ENCODE measurements at regions of chrX and their contacts with region 1.

Region 1: DNA sequence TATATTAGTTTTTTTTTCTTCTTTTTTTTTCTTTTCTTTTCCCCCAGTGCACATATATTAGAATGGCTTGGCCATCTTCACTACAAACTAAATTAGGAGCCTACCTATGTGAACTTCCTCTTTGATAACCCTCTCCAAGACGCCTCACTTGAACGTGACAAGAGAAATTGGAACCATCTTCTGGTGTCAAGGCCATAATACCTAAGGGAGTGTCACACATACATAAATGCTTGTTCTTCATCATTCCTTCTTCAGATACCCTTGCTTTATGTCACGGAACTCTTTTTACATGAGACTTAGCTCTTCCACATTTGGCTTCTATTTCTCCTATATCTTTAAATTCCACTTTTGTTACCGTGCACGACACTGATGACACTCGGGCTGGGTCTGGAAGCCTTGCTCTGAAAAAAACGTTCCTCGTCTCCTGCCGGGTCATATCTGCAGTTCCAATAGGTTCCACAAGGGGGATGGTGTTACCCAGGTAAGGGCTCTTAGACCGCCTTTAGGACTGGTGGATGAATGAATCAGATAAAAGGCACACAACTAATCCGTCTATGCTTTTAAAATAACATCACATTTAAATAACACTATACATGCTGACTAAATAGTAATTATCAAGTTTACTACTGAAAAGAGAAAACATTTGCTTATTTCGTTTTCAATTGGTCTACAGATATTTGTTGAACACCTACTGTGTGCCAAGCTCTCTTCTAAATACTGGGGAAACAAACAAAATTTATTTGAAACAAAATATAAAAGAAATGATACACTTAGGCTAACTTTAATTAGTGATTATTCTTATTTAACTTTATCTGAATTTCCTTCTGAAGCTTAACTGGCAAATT is 19.9 kb downstream of the DGAT2L6 start:
- DNase-seq: peak; percentile 67
- H3K4me3 ChIP-seq: no peak overlapping the region
- H3K27ac ChIP-seq: no peak overlapping the region
- H3K4me1 ChIP-seq: no peaks in the 10 kb centered on the region
- H3K27me3 ChIP-seq: no peaks in the 10 kb centered on the region
- CTCF ChIP-seq: peak; percentile 74

Region 2: GRCh38 chrX:69961365-69962072 is 235.7 kb before region 1 on chrX:
- intact Hi-C with region 1: no loop called
- DNase-seq: no peak
- H3K4me3 ChIP-seq: no peak overlapping the region
- H3K27ac ChIP-seq: no peak overlapping the region
- H3K4me1 ChIP-seq: no peaks in the 10 kb centered on the region
- H3K27me3 ChIP-seq: no peaks in the 10 kb centered on the region
- CTCF ChIP-seq: no peak

Region 3: DNA sequence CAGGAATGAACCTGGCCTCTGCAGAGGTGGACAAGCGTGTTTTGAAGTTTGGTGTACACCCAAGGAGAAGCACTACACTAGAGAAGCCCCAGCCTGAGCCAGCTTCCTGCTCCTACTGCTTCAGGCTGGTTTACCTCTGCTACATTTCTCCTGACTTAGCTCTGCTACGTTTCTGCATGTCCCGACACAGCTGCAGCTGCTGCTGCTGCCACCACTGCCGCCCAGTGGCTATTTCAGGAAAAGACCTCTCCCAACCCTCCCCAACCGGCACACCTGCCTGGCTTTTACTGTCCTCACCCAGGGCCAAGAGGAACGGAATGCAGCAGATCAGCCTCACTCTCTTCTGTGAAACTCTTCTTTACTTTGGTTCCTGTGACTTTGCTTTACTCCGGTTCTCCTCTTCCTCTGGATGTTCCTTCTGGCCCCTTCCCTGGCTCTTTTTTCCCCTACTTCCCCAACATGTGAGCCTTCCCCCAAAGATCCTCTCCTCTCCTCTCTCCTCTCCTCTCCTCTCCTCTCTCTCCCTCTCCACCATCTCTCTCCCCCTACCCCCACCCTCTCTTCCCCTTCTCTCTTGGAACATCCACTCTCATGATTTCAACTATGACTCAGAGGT is 65.9 kb after region 1 on chrX:
- intact Hi-C with region 1: loop called (anchors 5 kb)
- DNase-seq: peak; percentile 56
- H3K4me3 ChIP-seq: no peak overlapping the region
- H3K27ac ChIP-seq: no peak overlapping the region
- H3K4me1 ChIP-seq: no peaks in the 10 kb centered on the region
- H3K27me3 ChIP-seq: no peaks in the 10 kb centered on the region
- CTCF ChIP-seq: peak; percentile 35

Region 4: GRCh38 chrX:70313503-70313902 is 116.3 kb after region 1 on chrX:
- intact Hi-C with region 1: no loop called
- DNase-seq: no peak
- H3K4me3 ChIP-seq: no peak overlapping the region
- H3K27ac ChIP-seq: no peak overlapping the region
- H3K4me1 ChIP-seq: no peaks in the 10 kb centered on the region
- H3K27me3 ChIP-seq: no peaks in the 10 kb centered on the region
- CTCF ChIP-seq: no peak